Posterior vena cava (tissue), 2 donors: ENCODE measurements at regions of chr16 and their contacts with region 1.

Region 1: DNA sequence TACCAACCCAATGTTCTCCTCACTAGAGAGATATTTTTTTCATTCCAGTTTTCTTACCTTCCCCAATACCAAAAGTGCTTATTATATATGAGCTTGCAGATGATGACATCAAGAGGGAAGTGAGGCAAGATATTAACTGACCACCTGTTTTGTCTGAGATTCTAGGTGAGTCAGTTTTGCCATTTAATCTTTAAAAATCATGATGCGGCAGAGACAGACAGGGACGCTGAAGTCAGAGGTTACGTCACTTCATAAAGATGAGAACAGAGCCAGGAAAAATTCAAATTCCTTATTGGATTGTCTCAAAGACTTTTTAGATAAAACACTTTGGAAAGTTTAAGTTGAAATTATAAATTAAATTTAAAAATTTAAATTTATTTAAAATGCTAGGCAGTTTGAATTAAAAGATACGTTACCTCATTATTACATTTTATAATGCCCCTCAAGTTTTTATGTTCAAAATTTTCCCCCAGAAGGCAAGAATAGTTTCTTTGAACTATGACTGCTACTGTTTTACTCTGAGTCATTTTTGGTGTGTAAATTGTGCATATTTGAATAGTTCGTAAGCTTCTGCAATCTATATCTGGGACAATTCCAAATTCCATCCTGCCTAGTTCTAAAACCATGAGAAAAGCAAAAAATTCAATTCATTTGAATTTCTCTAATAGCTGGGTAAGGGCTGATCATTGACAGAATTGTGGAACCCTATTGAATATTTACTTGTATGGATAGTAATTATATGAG is 839.6 kb upstream of the GOT2 start:
- DNase-seq: no peak

Region 2: GRCh38 chr16:57639172-57639887 is 1934.4 kb before region 1 on chr16:
- intact Hi-C with region 1: no loop called
- DNase-seq: no peak

Region 3: DNA sequence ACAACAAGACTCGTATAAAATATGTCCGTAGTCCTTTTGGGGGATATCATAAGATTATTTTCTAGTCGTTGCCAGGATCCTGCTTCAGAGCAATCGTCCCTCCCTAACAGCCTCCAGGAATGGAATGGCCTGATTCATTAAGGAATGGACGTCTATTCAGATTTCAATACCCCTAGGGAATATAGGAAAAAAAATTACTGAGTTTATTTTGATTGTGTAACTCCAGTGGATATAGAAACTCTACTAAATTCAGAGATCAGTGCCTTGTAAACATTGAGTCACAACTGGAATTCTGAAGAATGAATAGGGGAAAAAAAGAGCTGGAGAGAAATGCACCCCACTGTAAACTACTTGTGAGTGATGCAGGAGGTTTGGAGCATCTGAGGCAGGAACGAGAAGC is 331.9 kb after region 1 on chr16:
- intact Hi-C with region 1: no loop called
- DNase-seq: no peak

Region 4: GRCh38 chr16:60563166-60563565 is 989.5 kb after region 1 on chr16:
- intact Hi-C with region 1: loop called in 1 of 2 experiments (anchors 5 kb)
- DNase-seq: no peak